Activated naive CD4-positive, alpha-beta T cell treated with anti-CD3 and anti-CD28 coated beads for 36 hours (primary cell): ENCODE measurements at regions of chr3 and their contacts with region 1.

Region 1: GRCh38 chr3:101995371-101996046 is 146.2 kb downstream of the NFKBIZ start:
- DNase-seq: no peak
- H3K4me3 Mint-ChIP-seq: no peak overlapping the region
- H3K27ac Mint-ChIP-seq: no peak overlapping the region
- H3K4me1 Mint-ChIP-seq: peaks cover 32% of the 10 kb centered on the region
- H3K27me3 Mint-ChIP-seq: no peaks in the 10 kb centered on the region

Region 2: DNA sequence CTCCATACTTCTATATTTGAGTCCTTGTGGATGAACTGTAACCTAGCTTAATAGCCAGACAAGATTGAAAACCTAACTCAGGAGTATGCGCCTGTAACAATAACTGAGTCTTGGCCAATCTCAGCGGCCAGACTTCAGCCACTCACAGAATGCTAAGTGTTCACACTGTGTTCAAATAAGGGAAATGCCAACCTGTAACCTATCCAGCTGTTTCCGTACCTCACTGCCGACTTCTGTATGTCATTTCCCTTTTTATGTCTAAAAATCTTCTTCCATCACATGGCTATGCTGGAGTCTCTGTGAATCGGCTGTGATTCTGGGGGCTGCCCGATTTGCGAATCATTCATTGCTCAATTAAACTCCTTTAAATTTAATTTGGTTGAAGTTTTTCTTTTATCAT is 23.0 kb after region 1 on chr3:
- CTCF ChIA-PET with region 1: interaction called, 3 read pairs
- intact Hi-C with region 1: loop called (anchors 2 kb)
- DNase-seq: peak; percentile 11
- H3K4me3 Mint-ChIP-seq: no peak overlapping the region
- H3K27ac Mint-ChIP-seq: no peak overlapping the region
- H3K4me1 Mint-ChIP-seq: peaks cover 31% of the 10 kb centered on the region
- H3K27me3 Mint-ChIP-seq: no peaks in the 10 kb centered on the region

Region 3: DNA sequence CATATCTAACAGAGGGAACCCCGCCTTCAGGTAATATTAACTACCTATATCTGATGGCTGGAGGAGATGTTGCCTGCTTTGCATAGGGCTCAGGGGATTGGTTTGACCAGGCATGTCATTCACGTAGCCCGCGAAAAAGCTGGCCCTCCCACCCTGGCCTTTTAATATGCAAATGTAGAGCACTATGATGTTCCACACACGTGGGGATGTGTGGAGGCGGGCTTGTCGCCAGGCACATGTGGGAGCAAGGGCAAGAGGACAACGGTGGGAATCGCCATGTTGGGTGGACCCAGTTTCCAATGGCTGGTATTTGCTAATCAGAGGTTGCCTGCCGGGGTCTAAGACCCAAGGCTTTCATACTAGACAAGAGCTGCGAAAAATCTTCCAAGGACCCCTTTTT is 909.1 kb after region 1 on chr3:
- CTCF ChIA-PET with region 1: no interaction called
- intact Hi-C with region 1: no loop called
- DNase-seq: no peak
- H3K4me3 Mint-ChIP-seq: no peak overlapping the region
- H3K27ac Mint-ChIP-seq: no peak overlapping the region
- H3K4me1 Mint-ChIP-seq: no peaks in the 10 kb centered on the region
- H3K27me3 Mint-ChIP-seq: no peaks in the 10 kb centered on the region